ENCODE measurements at regions of chr12 and their contacts with region 1.

Region 1: GRCh38 chr12:77925536-77926108 is 94.9 kb downstream of the NAV3 start:
- DNase-seq: peak; percentile 54
- H3K4me3 ChIP-seq: peak overlapping the region in 1 of 2 experiments; percentile 61; a peak in 1 of 4 replicates
- H3K27ac ChIP-seq: peak overlapping the region; percentile 46 to 76; a peak in 3 of 4 replicates
- H3K4me1 ChIP-seq: peaks cover 3 to 25% of the 10 kb centered on the region in 2 experiments
- H3K27me3 ChIP-seq: no peaks in the 10 kb centered on the region
- CTCF ChIP-seq: peak; percentile 100
- EP300 ChIP-seq: peak in 1 of 2 experiments; percentile 29; a peak in 1 of 4 replicates
- RAD21 ChIP-seq: peak; percentile 88

Region 2: DNA sequence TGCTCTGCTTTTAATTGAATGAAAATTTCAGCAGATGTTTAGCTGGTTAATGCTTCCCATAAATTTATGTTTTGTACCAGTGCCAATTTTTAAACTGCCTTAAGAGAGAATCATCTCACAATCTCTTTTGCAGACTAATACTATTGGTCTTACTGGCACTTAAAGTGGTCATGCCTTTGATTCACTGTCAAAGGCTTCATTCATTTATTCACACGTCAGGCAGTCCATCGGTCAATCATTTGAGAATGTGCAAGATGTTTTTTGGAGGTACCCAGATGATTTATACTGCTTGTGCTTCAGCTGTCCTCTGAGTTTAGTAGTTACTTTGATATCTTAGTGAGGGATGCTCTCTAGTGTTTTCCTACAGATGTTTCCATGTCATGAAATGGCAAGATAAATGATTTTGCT is 11.5 kb before region 1 on chr12:
- CTCF ChIA-PET with region 1: interaction called, 15 read pairs
- POLR2A ChIA-PET with region 1: no interaction called
- DNase-seq: no peak
- H3K4me3 ChIP-seq: no peak overlapping the region
- H3K27ac ChIP-seq: no peak overlapping the region
- H3K4me1 ChIP-seq: peaks cover 0 to 6% of the 10 kb centered on the region in 2 experiments; a peak in 2 of 4 replicates
- H3K27me3 ChIP-seq: no peaks in the 10 kb centered on the region
- CTCF ChIP-seq: peak; percentile 29; the same call in 1 of the 2 replicates
- EP300 ChIP-seq: no peak
- RAD21 ChIP-seq: no peak; the same call in 1 of the 2 replicates

Region 3: GRCh38 chr12:77940011-77940423 is 14.4 kb after region 1 on chr12:
- CTCF ChIA-PET with region 1: interaction called, 20 read pairs
- POLR2A ChIA-PET with region 1: no interaction called
- DNase-seq: no peak
- H3K4me3 ChIP-seq: peak overlapping the region; percentile 50 to 51; a peak in 3 of 4 replicates
- H3K27ac ChIP-seq: peak overlapping the region; percentile 87 to 89
- H3K4me1 ChIP-seq: peaks cover 0 to 20% of the 10 kb centered on the region in 2 experiments; a peak in 2 of 4 replicates
- H3K27me3 ChIP-seq: no peaks in the 10 kb centered on the region
- CTCF ChIP-seq: peak; percentile 9; the same call in 1 of the 2 replicates
- EP300 ChIP-seq: peak in 1 of 2 experiments; percentile 86; a peak in 2 of 4 replicates
- RAD21 ChIP-seq: no peak

Measured in SK-N-SH (cell line).